Heart left ventricle (tissue), 16 donors: ENCODE measurements at regions of chr18 and their contacts with region 1.

Region 1: DNA sequence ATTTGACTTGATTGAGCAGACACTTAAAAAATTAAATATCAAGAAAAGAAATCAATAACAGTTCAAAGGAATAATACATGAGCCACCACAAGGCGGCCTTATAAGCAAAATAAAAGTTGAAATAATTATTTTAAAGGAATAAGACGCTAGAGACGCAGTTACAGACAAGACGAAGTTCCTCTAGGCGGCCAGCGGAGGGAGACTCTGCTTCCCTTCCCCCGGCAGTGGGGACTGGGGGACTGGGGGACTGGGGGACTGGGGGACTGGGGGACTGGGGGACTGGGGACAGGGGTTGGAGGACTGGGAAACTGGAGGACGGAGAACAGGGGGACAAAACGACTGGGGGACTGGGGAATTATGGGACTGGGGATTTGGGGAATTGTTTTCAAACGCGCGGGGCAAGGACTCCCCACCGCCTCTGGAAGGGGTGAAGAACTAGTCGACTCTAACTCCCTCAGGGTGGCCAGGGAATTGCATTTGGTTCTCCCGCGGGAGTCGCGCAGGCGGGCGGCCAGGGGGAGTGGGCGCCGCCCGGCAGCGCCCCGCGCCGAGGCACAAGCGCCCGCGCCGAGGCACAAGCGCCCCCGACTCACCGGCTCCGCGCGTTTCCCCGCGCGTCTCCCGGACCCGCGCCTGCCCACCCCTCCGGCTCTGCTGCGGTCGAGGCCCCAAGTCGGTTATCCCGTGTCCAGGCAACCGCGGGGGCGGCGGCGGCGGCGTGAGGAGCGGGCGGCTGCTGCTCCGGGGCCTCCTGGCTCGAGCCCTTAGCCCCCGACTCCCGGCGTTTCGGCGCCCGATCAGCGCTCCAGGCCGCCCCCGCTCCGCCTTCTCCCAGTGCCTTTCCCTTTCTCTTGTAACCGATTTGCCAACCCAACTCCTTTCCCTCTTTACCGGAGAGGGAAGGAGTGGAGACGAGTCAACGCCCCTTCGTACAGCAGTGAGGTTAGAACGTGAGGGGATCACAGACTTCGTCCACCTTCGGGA is at the start of gene CCDC178:
- DNase-seq: peak; percentile 12 to 64 (median 37)
- ATAC-seq: peak in 3 of 4 donors; percentile 74 to 86 (median 79)
- H3K4me3 ChIP-seq: peak within 1 kb of the TSS; percentile 40 to 65 (median 50)
- H3K27ac ChIP-seq: no peak within 1 kb of the TSS
- H3K4me1 ChIP-seq: peaks cover 0 to 5% (median 1%) of the 10 kb centered on the region in 12 donors
- H3K27me3 ChIP-seq: peaks cover 0 to 9% (median 0%) of the 10 kb centered on the region in 9 donors
- CTCF ChIP-seq: peak in 8 of 12 donors; percentile 21 to 51 (median 34)
- POLR2A ChIP-seq: no peak
- total RNA-seq, gene CCDC178: 0.25 to 1.00 (median 0.57) TPM in 6 of 9 donors, not detected in the others

Region 2: GRCh38 chr18:33231474-33232317 is 208.7 kb before region 1 on chr18:
- intact Hi-C with region 1: loop called in 1 of 10 experiments (anchors 10 kb)
- DNase-seq: peak in 4 of 5 donors; percentile 46 to 63 (median 48)
- ATAC-seq: peak; percentile 42 to 73 (median 68)
- H3K4me3 ChIP-seq: no peak overlapping the region
- H3K27ac ChIP-seq: no peak overlapping the region
- H3K4me1 ChIP-seq: no peaks in the 10 kb centered on the region
- H3K27me3 ChIP-seq: no peaks in the 10 kb centered on the region
- CTCF ChIP-seq: peak; percentile 75 to 93 (median 83)
- POLR2A ChIP-seq: no peak

Region 3: DNA sequence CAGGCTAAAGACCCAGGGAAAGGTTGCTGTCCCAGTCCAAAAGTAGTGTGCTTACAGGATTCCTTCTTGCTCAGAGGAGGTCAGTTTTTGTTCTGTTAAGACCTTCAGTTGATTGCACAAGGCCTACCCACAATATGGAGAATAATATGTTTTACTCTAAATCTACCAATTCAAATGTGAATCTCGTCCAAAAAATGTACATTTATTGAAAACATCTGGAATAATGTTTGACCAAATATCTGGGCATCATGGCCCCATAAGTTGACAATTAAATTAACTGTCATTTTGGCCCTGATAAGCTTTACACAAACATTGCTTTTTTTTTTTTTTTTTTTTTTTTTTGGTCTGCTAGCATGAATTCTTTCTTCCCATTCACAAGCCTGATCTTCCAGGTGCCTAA is 109.6 kb before region 1 on chr18:
- intact Hi-C with region 1: no loop called
- DNase-seq: no peak
- ATAC-seq: no peak
- H3K4me3 ChIP-seq: no peak overlapping the region
- H3K27ac ChIP-seq: no peak overlapping the region
- H3K4me1 ChIP-seq: no peaks in the 10 kb centered on the region
- H3K27me3 ChIP-seq: no peaks in the 10 kb centered on the region
- CTCF ChIP-seq: no peak
- POLR2A ChIP-seq: no peak

Region 4: GRCh38 chr18:33495278-33495677 is 54.9 kb after region 1 on chr18:
- intact Hi-C with region 1: loop called in 1 of 10 experiments (anchors 10 kb)
- DNase-seq: no peak
- ATAC-seq: peak in 2 of 4 donors; percentile 34 to 36
- H3K4me3 ChIP-seq: no peak overlapping the region
- H3K27ac ChIP-seq: no peak overlapping the region
- H3K4me1 ChIP-seq: no peaks in the 10 kb centered on the region
- H3K27me3 ChIP-seq: no peaks in the 10 kb centered on the region
- CTCF ChIP-seq: peak in 6 of 12 donors; percentile 7 to 44 (median 24)
- POLR2A ChIP-seq: no peak

Region 5: DNA sequence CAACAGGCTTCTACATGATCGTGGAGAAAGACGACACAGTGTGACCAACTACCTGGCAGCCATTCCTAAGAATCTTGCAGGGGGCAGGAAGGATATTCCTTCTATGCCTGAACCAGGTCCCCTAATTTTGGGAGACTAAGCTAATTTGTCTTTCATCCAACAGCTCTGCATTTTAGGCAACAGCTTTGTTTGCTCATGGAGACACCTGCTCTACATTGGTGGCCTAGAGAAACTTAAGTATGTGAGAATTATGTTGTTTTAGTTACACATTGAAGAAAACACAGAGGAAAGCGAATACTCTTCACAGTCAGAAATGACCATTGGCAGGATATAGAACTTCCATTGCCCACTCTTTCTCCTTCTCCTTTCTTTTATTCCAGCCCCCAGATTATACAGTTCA is 212.9 kb after region 1 on chr18:
- intact Hi-C with region 1: loop called in 1 of 10 experiments (anchors 10 kb)
- DNase-seq: no peak
- ATAC-seq: no peak
- H3K4me3 ChIP-seq: no peak overlapping the region
- H3K27ac ChIP-seq: no peak overlapping the region
- H3K4me1 ChIP-seq: peaks cover 0 to 9% (median 0%) of the 10 kb centered on the region in 12 donors
- H3K27me3 ChIP-seq: no peaks in the 10 kb centered on the region
- CTCF ChIP-seq: no peak
- POLR2A ChIP-seq: no peak

Region 6: DNA sequence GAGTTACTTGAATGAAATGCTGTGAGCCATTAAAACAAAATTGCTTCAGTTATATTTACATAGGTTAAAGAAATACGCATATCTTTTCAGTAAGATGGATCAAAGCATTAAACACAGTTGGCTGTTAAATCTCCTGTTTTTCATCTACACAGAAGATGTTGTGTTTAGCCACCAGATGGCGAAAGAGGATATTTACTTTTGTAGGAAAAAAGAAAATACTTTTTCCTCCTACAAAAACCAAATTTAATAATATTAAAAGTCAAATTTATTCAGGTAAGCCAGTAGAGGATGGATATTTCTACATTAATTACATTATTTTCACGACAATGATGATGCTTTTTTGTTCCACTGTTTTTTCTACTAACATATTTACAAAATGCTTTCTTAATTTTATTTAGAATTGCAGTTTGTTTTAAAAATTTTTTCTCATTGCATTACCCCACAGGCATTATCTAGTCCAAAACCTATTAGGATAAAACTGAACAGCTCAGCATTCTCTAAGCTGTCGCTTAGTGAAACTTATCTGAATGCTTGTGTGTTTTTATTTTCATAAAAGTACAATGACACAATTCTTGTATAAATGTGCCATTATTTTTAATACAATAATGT is 311.4 kb after region 1 on chr18:
- intact Hi-C with region 1: loop called in 1 of 10 experiments (anchors 10 kb)
- DNase-seq: no peak
- ATAC-seq: no peak
- H3K4me3 ChIP-seq: no peak overlapping the region
- H3K27ac ChIP-seq: no peak overlapping the region
- H3K4me1 ChIP-seq: peaks cover 0 to 9% (median 0%) of the 10 kb centered on the region in 12 donors
- H3K27me3 ChIP-seq: no peaks in the 10 kb centered on the region
- CTCF ChIP-seq: peak in 11 of 12 donors; percentile 17 to 56 (median 31)
- POLR2A ChIP-seq: no peak

Region 7: DNA sequence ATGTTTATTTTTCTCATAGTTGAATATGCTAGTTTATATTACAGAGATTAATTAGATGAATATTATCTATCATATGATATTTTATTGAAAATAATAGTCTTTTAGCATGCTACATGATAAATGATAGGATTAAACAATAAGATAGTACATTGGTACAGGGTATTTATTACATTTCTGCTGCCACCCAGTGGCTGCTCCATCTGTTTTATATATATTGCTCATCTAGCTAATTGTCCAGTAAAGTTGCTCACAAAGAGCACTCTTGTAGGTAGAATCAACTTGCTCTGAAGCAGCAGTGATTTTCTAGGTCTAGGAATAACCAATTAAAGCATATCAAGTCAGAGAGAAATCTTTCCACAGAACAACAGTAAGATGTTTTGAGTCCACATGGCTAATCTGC is 321.0 kb after region 1 on chr18:
- intact Hi-C with region 1: loop called in 3 of 10 experiments (anchors 2 to 10 kb)
- DNase-seq: peak in 2 of 5 donors; percentile 26 to 43
- ATAC-seq: peak in 2 of 4 donors; percentile 53 to 59
- H3K4me3 ChIP-seq: no peak overlapping the region
- H3K27ac ChIP-seq: no peak overlapping the region
- H3K4me1 ChIP-seq: peaks cover 0 to 3% (median 0%) of the 10 kb centered on the region in 12 donors
- H3K27me3 ChIP-seq: no peaks in the 10 kb centered on the region
- CTCF ChIP-seq: peak in 10 of 12 donors; percentile 7 to 50 (median 38)
- POLR2A ChIP-seq: no peak